Activated CD4-positive, alpha-beta memory T cell treated with anti-CD3 and anti-CD28 coated beads, Interleukin-2, amount 10 ng/mL, durations not matched to agents 7 days and 5 days (primary cell): ENCODE measurements at regions of chr3 and their contacts with region 1.

Region 1: DNA sequence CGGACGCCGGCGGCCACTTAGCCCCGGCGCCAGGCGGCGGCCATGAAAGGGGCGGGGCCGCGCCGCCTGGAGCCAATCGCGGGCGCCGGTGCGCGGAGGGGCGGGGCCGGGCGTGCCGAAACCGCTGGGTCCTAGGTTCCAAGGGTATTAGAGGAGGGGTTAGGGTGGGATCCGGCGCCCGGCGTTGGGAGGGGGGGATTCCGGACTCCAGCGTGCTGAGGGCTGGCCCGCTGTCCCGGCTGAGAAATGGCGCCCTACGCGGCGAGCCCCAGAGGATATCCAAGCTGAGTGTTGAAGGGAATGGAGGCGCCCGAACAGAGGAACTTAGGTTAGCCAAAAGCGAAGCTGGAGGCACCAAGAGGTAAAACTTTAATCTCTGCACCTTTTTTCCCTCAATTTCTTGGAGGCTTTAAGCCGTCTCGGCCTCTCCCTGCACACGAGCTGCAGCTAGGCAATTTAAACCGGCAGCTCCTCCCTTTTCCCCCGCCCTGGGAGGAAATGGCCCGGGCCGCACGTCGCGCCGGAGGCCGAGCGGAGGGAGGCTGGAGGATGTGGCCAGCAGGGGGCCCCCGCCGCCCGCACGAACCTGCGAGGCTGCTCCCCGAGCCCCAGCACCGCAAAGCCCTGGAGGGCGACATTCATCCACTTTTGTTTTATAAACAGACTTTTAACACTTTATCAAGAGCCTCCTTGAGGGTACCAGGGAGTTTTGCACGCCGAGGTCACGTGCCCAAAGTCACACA is at the start of gene XXYLT1:
- DNase-seq: peak; percentile 92
- H3K4me3 Mint-ChIP-seq: peak within 1 kb of the TSS; percentile 82
- H3K27ac Mint-ChIP-seq: peak within 1 kb of the TSS; percentile 85
- H3K4me1 Mint-ChIP-seq: peaks cover 22% of the 10 kb centered on the region
- H3K27me3 Mint-ChIP-seq: no peaks in the 10 kb centered on the region
- total RNA-seq, gene XXYLT1: 5.0 to 5.6 TPM

Region 2: DNA sequence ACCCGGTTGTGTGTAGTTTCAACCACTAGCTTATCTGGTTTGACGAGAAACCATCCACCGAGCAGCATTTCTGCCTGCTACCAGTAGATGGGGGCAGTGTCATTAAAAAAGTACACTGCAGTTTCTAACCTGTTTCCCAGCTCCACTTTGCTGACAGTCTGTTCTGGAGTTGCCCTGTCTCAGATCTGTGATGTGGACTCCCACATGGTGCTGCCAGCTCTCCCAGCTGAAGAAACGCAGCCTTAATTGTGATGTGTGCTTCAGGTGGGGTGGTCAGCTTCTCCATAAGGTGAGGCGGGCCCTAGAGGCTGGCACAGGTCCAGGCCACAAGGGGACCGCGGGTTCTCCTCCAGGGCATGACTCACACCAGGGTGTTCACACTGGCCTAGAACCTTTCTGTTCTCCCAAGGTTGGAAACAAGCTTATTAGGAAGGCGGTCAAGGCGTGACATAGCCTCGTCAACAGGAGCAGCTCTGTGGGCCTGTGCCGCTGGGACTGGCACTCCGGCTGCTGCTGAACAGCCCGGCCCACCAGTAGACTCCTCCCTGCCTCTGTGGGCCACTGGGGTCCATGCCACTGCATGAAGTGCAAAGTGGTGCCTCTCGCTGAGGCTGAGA is 588.5 kb before region 1 on chr3:
- CTCF ChIA-PET with region 1: interaction called, 44 read pairs
- POLR2A ChIA-PET with region 1: interaction called, 6 read pairs
- DNase-seq: peak; percentile 71
- H3K4me3 Mint-ChIP-seq: no peak overlapping the region
- H3K27ac Mint-ChIP-seq: no peak overlapping the region
- H3K4me1 Mint-ChIP-seq: peaks cover 45% of the 10 kb centered on the region
- H3K27me3 Mint-ChIP-seq: peaks cover 38% of the 10 kb centered on the region

Region 3: DNA sequence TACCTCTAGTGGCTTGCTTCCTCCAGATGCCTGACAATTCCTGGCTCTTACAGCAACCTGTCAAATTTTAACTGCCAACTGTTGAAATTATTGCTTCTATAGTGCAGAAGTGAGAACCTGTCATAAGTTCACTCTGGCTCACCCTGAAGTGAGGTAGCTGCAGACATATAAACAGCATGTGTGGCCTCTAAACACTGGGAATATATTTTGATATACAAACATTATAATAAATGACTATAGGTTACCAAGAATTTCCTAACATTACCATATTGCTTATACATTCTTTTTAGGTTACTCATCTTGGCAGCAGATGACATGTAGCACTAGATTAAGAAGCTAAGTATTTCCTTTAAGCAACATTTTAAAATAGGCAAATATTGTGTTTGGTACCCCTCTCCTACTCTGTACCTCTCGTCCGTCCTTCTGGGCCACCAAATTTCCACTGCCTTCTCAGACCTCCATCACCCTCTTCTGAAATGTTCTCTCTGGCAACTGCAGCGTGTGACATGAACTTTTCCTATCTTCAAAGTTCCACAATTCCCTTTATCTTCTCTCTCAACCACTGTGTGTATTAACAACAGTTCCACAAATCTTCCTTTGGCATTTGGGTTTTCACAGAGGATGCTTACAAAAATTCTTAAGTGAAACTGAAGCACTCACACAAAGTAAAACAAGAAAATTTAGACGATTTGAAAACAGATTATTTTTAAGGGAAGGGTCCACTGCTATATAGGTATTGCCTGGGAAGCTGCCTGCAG is 15.0 kb after region 1 on chr3:
- CTCF ChIA-PET with region 1: interaction called, 35 read pairs
- POLR2A ChIA-PET with region 1: interaction called, 5 read pairs
- DNase-seq: no peak
- H3K4me3 Mint-ChIP-seq: no peak overlapping the region
- H3K27ac Mint-ChIP-seq: no peak overlapping the region
- H3K4me1 Mint-ChIP-seq: peaks cover 13% of the 10 kb centered on the region
- H3K27me3 Mint-ChIP-seq: no peaks in the 10 kb centered on the region

Region 4: GRCh38 chr3:195460091-195460713 is 188.9 kb after region 1 on chr3:
- CTCF ChIA-PET with region 1: interaction called, 11 read pairs
- POLR2A ChIA-PET with region 1: no interaction called
- DNase-seq: no peak
- H3K4me3 Mint-ChIP-seq: no peak overlapping the region
- H3K27ac Mint-ChIP-seq: no peak overlapping the region
- H3K4me1 Mint-ChIP-seq: peaks cover 12% of the 10 kb centered on the region
- H3K27me3 Mint-ChIP-seq: no peaks in the 10 kb centered on the region

Region 5: DNA sequence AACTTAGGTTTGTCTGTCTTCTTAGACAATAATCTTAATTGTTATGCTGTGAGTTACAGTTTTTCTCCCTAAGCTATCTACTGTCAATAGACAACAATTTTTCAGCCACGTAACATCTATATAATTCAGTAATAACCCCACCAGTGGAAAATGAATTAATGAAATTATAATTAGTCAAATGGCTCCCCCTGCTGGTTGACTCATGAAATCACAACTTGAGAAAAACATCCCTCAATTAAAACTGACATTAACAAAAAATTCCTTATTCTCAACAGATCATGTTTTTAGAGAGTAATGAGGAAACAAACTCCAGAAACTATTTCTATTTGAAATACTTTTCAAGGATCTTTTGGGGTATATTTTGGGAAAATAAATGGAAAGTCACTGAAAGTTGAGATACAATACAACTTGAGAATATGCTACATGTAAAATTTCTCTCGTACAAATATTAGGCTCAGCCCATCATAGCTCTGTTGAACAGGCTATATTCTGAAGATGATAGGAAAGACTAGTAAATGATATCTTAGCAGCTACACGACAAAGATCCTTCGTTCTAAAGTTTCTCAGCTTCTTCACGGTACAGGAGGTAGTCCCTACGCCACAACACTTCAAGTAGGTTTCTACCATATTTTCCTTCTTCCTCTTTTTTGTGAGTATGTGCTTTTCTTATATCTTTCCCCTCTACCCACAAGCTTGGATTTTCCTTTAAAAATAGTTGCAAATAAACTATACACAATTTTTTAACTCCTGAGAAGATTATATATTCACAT is 251.2 kb after region 1 on chr3:
- CTCF ChIA-PET with region 1: interaction called, 194 read pairs
- POLR2A ChIA-PET with region 1: interaction called, 18 read pairs
- DNase-seq: no peak
- H3K4me3 Mint-ChIP-seq: no peak overlapping the region
- H3K27ac Mint-ChIP-seq: no peak overlapping the region
- H3K4me1 Mint-ChIP-seq: peaks cover 38% of the 10 kb centered on the region
- H3K27me3 Mint-ChIP-seq: no peaks in the 10 kb centered on the region

Region 6: DNA sequence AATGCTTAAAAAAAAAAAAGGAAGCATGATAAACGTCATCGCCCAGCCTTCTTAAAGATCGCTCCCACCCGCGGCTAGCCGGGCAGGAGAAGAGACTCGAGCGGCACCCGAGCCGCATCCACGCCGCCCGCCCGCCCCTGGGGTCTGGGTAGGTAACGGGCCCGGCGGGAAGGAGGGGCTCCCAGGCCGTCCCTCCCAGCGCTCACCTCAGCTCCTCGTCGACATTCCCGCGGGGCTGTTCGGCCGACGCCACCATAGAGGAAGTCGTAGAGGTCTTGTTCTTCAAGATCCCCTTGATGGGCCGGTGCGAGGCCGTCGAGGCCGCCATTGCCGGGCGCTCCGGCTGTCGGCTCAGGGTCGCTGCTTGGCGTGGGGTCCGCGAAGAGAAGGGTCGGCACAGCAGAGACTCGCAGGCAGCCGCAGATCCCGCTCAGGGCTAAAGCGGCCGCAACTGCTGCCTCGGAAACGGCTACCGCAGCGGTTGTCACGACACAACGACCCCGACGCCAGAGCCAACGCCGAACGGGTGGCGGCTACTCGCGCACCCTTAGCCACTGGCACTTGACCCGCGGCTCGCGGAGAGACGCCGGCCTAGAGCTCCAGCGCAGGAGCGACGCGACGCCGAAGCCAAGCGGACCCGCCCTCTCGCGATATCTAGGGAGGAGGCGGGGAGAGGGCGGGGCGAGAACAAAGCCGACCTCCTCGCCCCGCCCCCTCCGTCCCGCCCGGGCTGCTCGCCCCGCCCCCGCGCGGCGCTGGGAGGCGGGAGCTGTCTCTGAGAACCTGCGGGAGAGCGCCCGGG is 271.6 kb after region 1 on chr3 and contains the start of gene PPP1R2:
- CTCF ChIA-PET with region 1: interaction called, 44 read pairs
- POLR2A ChIA-PET with region 1: interaction called, 33 read pairs
- DNase-seq: peak; percentile 92
- H3K4me3 Mint-ChIP-seq: peak within 1 kb of the TSS; percentile 83
- H3K27ac Mint-ChIP-seq: peak within 1 kb of the TSS; percentile 84
- H3K4me1 Mint-ChIP-seq: peaks cover 77% of the 10 kb centered on the region
- H3K27me3 Mint-ChIP-seq: no peaks in the 10 kb centered on the region
- total RNA-seq, gene PPP1R2: 75.0 to 81.8 TPM